Head of caudate nucleus (tissue), 42 donors: ENCODE measurements at regions of chr3 and their contacts with region 1.

Region 1: GRCh38 chr3:30199096-30199759 is 407.2 kb upstream of the TGFBR2 start:
- DNase-seq: peak; percentile 48 to 94 (median 79)

Region 2: GRCh38 chr3:30030735-30031134 is 168.5 kb before region 1 on chr3:
- intact Hi-C with region 1: no loop called
- DNase-seq: no peak

Region 3: GRCh38 chr3:30042274-30042859 is 156.9 kb before region 1 on chr3:
- intact Hi-C with region 1: loop called (anchors 10 kb)
- DNase-seq: peak; percentile 20 to 87 (median 68)

Region 4: DNA sequence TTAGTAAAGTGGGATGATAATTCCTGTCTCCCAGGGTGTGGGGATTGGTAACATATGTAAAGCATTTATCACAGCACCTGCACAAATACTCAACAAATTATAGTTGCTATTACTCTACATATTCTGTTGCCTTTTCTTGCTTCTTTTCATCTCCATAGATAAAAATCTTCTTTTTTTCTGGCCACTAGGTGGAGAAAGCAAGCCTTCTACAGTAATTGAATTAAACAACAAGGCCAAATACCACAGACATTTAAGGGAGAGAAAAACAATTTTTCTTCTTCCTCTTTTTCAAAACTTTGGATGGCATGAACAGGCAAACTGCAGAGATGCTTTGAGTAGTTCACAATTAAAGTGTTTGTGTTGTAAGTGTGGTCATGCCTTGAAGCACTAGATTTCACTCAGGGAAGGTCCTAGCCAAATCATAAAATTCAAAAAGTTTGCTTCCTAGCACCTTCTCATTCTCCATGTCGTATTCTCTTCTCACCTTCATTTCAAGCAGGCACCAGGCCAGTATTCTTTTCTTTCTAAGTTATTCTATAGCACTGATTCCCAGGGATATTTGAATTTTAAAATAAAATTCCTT is 86.2 kb before region 1 on chr3:
- intact Hi-C with region 1: loop called (anchors 2 kb)
- DNase-seq: peak in 1 of 42 donors; percentile 34

Region 5: GRCh38 chr3:30368978-30369377 is 169.8 kb after region 1 on chr3:
- intact Hi-C with region 1: no loop called
- DNase-seq: no peak

Region 6: DNA sequence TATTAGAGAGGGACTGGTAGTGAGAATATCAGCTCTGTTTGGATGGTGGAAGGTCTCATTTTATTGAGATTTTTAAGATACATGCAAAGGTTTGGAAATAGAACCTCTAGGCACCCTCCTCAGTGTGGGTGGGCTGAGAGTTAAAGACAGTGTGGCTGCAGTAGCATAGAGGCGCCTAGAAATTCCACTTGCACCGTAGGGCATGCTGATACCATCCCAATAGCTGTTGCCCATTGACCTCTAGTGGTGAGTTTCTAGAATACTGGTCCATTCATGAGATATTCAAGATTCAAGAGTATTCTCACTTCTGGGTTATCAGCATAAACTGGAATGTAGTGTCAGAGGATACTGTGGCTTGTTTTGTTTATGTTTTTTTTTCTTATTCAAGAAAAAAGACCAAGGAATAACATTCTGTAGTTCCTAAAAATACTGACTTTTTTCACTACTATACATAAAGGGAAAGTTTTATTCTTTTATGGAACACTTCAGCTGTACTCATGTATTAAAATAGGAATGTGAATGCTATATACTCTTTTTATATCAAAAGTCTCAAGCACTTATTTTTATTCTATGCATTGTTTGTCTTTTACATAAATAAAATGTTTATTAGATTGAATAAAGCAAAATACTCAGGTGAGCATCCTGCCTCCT is 494.4 kb after region 1 on chr3:
- intact Hi-C with region 1: loop called (anchors 10 kb)
- DNase-seq: peak in 34 of 42 donors; percentile 15 to 84 (median 61)